Activated CD4-positive, alpha-beta T cell treated with anti-CD3 and anti-CD28 coated beads for 36 hours (primary cell): ENCODE measurements at regions of chr1 and their contacts with region 1.

Region 1: DNA sequence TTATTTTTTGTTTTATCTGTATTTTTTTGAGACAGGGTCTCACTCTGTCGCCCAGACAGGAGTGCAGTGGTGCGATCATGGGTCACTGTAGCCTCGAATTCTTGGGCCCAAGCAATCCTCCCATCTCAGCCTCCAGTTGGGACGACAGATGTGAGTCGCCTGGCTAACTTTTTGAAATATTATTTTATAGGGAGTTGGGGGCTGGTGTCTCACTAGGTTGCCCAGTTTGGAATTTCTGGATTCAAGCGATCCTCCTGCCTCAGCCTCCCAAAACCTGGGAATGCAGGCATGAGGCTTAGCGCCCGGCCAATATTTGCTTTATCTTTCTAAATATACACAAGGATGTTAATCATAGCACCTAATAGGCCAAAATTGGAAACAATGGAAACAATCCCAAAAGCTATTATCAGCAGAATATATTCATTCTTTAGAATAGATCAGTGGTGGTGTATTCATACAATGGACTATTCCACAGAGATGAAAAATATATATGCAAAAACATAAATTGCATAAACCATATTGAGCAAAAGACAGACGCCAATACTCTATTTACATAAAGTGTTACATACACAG is 55.9 kb downstream of the DAP3 start:
- DNase-seq: no peak
- ATAC-seq: no peak
- H3K4me3 Mint-ChIP-seq: peak overlapping the region; percentile 90
- H3K27ac Mint-ChIP-seq: peak overlapping the region; percentile 78
- H3K4me1 Mint-ChIP-seq: peaks cover 4% of the 10 kb centered on the region
- H3K27me3 Mint-ChIP-seq: no peaks in the 10 kb centered on the region

Region 2: DNA sequence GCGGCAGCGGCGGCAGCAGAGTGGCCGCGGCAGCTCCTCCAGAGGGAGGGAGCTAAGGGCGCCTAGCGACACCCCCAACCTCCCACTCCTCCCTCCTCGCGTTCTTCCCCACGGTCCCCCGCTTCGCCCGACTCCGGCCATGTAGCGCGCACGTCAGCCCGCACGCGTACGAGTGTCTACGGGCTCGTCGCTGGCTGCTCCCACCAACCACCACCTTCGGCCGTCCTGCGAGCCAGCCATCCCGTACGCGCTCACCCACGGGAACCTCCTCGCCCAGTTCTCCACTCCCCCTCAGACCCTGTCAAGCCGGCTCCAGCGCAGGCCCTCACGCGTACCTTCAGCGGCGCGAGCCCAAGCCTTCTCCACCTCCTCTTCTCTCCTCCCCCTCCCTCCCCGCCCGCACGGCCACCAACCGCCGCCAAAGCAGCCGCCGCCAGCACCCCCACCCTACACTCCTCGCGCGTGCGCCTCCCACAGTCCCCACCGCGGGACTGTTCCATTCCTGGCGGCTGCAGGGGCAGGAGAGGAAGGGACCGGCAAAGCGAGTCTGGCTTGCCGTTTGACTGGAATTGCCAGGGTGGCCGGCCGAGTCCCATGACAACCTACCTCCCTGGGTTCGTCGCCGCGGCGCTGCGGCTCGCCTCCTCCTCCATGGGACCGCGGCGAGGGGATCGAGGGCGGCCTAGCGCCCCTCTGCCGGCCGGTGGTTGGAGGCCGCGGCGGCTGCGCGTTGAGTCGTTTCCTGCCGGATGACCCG is 56.3 kb before region 1 on chr1 and contains the start of gene YY1AP1:
- CTCF ChIA-PET with region 1: no interaction called
- POLR2A ChIA-PET with region 1: no interaction called
- intact Hi-C with region 1: loop called in 1 of 2 experiments (anchors 5 kb)
- DNase-seq: peak; percentile 95
- ATAC-seq: peak; percentile 86
- H3K4me3 Mint-ChIP-seq: peak within 1 kb of the TSS; percentile 97
- H3K27ac Mint-ChIP-seq: peak within 1 kb of the TSS; percentile 94
- H3K4me1 Mint-ChIP-seq: peaks cover 29% of the 10 kb centered on the region
- H3K27me3 Mint-ChIP-seq: no peaks in the 10 kb centered on the region
- total RNA-seq, gene YY1AP1: 59.6 to 76.0 TPM

Region 3: DNA sequence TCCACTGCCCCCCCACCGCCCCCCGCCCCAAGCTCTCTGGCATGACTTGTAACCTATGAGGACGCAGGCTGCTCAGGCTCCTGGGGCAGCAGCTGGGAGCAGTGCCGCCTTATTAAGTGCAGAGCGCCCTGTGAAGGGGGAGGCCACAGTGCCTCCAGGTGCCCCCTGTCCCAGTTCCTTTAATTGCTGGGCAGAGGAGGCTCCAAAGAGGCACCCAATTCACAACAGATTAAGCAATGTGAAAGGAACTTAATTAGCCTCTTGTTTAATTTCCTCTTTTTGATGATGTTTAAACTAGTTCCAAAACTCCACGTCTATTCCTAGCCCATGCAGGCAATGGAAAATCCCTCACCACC is 199.6 kb after region 1 on chr1:
- CTCF ChIA-PET with region 1: no interaction called
- POLR2A ChIA-PET with region 1: no interaction called
- intact Hi-C with region 1: no loop called
- DNase-seq: no peak
- ATAC-seq: no peak
- H3K4me3 Mint-ChIP-seq: no peak overlapping the region
- H3K27ac Mint-ChIP-seq: peak overlapping the region; percentile 96
- H3K4me1 Mint-ChIP-seq: peaks cover 72% of the 10 kb centered on the region
- H3K27me3 Mint-ChIP-seq: no peaks in the 10 kb centered on the region

Region 4: DNA sequence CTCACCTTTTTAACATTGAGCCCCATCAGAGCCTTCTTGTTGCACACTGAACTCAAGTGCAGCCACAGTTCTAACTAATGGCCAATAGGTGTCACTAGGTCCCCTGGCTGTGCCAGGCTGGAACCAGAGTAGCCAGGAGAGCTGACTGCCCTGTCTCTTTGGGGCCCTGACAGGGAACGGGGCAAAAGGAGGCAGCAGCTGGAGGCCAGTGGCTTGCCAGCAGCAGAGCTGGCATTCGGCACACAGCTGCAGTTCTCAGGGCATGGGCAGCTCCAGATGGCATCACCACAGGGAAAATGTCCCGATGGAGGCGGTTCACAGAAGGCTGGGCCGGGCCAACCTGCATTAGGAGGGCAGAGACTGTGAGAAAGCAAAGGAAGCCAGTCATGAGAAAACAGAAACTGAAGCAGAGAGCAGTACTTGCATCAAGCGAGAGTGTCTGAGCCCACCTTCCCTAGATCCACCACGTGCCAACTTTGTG is 1618.9 kb after region 1 on chr1:
- CTCF ChIA-PET with region 1: no interaction called
- POLR2A ChIA-PET with region 1: no interaction called
- intact Hi-C with region 1: no loop called
- DNase-seq: peak; percentile 21
- ATAC-seq: peak; percentile 51
- H3K4me3 Mint-ChIP-seq: no peak overlapping the region
- H3K27ac Mint-ChIP-seq: no peak overlapping the region
- H3K4me1 Mint-ChIP-seq: no peaks in the 10 kb centered on the region
- H3K27me3 Mint-ChIP-seq: no peaks in the 10 kb centered on the region